ENCODE measurements at regions of chr6 and their contacts with region 1.

Region 1: GRCh38 chr6:33344701-33345697 is 27.5 kb upstream of the ZBTB22 start:
- DNase-seq: peak; percentile 78
- H3K4me3 Mint-ChIP-seq: no peak overlapping the region
- H3K27ac Mint-ChIP-seq: no peak overlapping the region
- H3K4me1 Mint-ChIP-seq: peaks cover 15% of the 10 kb centered on the region
- H3K27me3 Mint-ChIP-seq: no peaks in the 10 kb centered on the region
- CTCF ChIP-seq: peak; percentile 62

Region 2: DNA sequence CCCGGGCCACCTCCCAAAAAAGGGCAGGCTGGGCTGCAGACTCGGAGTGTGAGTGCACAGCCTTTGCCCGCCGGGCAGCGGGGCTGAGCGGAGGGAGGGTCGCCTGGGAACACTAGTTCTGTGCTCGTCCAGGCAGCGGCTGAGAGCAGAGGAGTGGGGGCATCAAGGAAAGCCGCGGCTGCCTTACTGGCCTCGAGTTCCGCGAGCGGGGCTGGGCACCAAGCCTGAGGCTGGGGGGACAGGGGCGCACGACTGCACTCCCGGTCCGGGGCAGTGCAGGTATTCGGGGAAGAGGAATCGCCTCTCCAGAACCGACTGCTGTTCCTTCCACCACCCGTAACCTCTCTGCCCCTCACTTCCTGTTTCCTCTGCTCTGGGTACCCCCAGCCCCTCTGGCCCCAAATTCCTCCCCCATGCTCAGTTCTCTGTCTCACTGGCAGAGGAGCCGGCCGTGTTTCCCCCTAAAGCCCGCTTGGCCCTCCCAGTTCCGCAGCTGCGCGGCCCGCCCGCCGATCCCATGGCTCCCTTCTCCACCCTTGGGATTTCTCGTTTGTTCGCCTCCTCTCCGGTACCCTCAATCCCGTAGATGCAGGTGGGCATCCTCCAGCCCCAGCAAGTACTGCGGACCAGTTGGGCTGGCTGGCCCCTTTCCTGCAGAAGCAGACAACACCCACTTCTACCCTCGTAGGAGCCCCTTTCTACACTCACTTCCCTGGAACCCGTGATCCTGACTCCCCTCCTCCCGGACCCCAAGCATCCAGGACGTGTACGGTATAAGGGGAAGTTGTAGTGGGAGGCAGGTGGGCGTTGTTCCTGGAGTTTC is 131.6 kb before region 1 on chr6:
- CTCF ChIA-PET with region 1: no interaction called
- POLR2A ChIA-PET with region 1: no interaction called
- intact Hi-C with region 1: no loop called
- DNase-seq: no peak
- H3K4me3 Mint-ChIP-seq: peak overlapping the region; percentile 50
- H3K27ac Mint-ChIP-seq: no peak overlapping the region
- H3K4me1 Mint-ChIP-seq: peaks cover 31% of the 10 kb centered on the region
- H3K27me3 Mint-ChIP-seq: peaks cover 48% of the 10 kb centered on the region
- CTCF ChIP-seq: no peak

Region 3: DNA sequence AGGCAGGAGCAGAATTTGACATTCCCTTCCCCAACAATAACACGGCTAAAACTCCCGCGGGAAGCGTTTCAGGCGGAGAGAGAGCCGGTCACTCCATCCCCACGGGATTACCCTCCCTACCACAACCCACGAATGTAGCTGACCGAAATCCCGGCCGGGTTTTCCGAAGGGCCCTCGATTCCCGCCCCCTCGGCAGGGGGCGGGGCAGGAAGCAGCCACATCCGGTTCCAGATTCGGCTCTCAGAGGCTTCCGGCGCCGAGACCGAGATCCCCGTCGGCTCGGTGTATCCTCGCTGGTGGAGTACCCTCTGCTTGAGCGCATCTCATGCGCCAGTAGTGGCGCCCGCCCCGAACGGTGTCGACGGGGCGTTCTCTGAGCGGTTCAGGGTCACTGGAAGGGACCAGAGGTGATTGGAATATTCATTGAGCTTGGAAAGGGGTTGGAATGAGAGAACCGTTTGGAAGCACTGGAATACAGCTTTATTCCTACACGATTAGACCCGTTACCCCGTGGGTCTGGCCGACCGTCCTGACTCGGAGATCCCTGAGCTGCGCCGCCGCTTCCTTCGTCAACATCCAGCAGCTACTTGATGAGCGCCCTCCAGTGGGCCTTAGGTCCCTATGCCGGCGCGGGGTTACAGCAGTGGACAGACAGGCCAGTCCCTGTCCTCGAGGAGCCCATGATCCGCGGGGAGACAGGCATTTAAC is 45.6 kb before region 1 on chr6:
- CTCF ChIA-PET with region 1: interaction called, 4 read pairs
- POLR2A ChIA-PET with region 1: interaction called, 4 read pairs
- intact Hi-C with region 1: loop called (anchors 1 kb)
- DNase-seq: peak; percentile 93
- H3K4me3 Mint-ChIP-seq: peak overlapping the region; percentile 96
- H3K27ac Mint-ChIP-seq: peak overlapping the region; percentile 100
- H3K4me1 Mint-ChIP-seq: peaks cover 28% of the 10 kb centered on the region
- H3K27me3 Mint-ChIP-seq: no peaks in the 10 kb centered on the region
- CTCF ChIP-seq: peak; percentile 64

Region 4: GRCh38 chr6:33317669-33318425 is 27.2 kb before region 1 on chr6 and contains the start of gene ZBTB22:
- CTCF ChIA-PET with region 1: interaction called, 11 read pairs
- POLR2A ChIA-PET with region 1: interaction called, 10 read pairs
- intact Hi-C with region 1: no loop called
- DNase-seq: peak; percentile 100
- H3K4me3 Mint-ChIP-seq: peak within 1 kb of the TSS; percentile 81
- H3K27ac Mint-ChIP-seq: peak within 1 kb of the TSS; percentile 80
- H3K4me1 Mint-ChIP-seq: peaks cover 66% of the 10 kb centered on the region
- H3K27me3 Mint-ChIP-seq: no peaks in the 10 kb centered on the region
- CTCF ChIP-seq: no peak
- total RNA-seq, gene ZBTB22: 12.3 and 15.5 TPM in 2 replicates

Region 5: DNA sequence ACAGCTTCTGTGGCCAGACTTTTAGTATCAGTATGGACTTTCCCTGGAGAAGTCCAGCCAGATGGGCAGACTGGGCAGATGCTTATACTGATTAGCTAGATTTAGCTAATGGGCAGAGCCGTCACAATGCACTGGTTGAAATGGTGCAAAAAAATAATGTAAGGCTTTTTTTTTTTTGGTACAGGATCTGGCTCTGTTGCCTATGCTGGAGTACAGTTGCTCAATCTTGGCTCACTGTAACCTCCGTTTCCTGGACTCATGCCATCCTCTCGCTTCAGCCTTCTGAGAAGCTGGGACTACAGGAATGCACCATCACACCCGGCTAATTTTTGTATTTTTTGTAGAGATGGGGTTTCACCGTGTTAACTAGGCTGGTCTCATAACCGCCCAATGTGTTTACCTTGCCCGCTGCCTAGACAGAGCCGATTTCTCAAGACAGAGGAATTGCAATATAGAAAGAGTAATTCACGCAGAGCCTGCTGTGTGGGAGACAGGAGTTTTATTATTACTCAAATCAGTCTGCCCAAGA is 30.2 kb after region 1 on chr6:
- CTCF ChIA-PET with region 1: interaction called, 17 read pairs
- POLR2A ChIA-PET with region 1: interaction called, 19 read pairs
- intact Hi-C with region 1: no loop called
- DNase-seq: peak; percentile 96
- H3K4me3 Mint-ChIP-seq: peak overlapping the region; percentile 56
- H3K27ac Mint-ChIP-seq: peak overlapping the region; percentile 71
- H3K4me1 Mint-ChIP-seq: peaks cover 16% of the 10 kb centered on the region
- H3K27me3 Mint-ChIP-seq: no peaks in the 10 kb centered on the region
- CTCF ChIP-seq: no peak

Measured in MCF 10A (cell line).